ENCODE measurements at regions of chr15 and their contacts with region 1.

Region 1: DNA sequence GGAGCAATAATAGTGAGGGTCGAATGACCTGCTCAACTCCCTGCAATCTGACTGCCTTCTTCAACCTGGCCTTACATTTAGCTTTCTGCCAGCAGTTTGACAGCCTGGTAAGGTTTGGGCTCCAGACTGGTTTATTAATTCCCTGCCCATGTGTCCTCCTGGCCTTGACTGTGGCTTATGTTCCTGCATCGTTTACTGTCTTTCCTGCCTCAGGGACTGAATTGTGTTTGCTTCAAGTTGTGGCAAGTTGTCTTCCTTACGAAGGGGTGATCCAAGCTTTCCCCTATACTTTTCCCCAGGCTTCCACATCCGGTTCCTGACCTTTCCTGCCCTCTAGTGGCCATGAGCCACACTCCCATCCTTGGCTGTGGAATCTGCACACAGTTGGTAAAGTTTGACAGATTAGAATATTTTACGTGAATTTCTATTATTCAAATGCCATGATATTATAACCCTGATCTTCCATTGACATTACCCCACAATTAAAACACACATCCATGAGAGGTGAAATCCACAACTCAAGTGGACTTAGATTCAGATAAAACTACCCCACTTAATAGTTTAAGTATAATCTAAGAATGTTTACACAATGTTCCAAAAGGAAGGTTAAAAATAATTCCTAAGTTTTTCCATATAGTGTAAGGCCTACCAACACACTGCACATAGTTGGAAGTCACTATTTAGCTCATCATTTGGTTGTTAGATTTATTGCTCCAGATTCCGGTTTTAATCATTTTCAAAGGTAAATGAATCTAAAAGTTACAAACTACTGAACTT is 95.7 kb downstream of the NEDD4 start:
- DNase-seq: peak; percentile 47 to 63
- ATAC-seq: peak; percentile 78 to 85 (median 81)
- H3K4me3 ChIP-seq: peak overlapping the region; percentile 63
- H3K27ac ChIP-seq: peak overlapping the region; percentile 94
- H3K4me1 ChIP-seq: peaks cover 55% of the 10 kb centered on the region
- H3K27me3 ChIP-seq: no peaks in the 10 kb centered on the region
- CTCF ChIP-seq: peak; percentile 80

Region 2: GRCh38 chr15:55858661-55859060 is 39.1 kb before region 1 on chr15:
- intact Hi-C with region 1: loop called in 1 of 2 experiments (anchors 5 kb)
- DNase-seq: no peak
- ATAC-seq: no peak
- H3K4me3 ChIP-seq: no peak overlapping the region
- H3K27ac ChIP-seq: no peak overlapping the region
- H3K4me1 ChIP-seq: peaks cover 5% of the 10 kb centered on the region
- H3K27me3 ChIP-seq: no peaks in the 10 kb centered on the region
- CTCF ChIP-seq: no peak

Region 3: DNA sequence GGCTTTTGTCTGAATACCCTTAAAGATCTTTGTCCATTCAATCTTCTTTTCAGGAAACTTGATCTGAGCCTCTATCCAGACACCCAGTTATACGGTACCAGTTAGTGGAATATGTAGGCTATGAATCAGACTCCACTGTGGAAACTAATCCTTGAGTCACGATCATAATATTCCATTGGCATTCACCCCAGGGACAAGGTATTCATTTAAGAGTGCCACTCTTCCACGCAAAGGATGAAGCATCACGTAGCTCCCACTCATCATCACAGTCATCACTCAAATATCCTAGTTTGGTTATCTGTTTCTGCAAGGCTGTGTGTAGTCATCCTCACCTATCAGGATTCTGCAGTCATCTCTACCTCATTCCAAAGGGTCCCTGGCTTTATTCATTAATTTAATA is 10.0 kb after region 1 on chr15:
- intact Hi-C with region 1: loop called in 1 of 2 experiments (anchors 1 kb)
- DNase-seq: no peak
- ATAC-seq: peak; percentile 83 to 88 (median 86)
- H3K4me3 ChIP-seq: peak overlapping the region; percentile 43
- H3K27ac ChIP-seq: peak overlapping the region; percentile 82
- H3K4me1 ChIP-seq: peaks cover 41% of the 10 kb centered on the region
- H3K27me3 ChIP-seq: no peaks in the 10 kb centered on the region
- CTCF ChIP-seq: no peak

Region 4: DNA sequence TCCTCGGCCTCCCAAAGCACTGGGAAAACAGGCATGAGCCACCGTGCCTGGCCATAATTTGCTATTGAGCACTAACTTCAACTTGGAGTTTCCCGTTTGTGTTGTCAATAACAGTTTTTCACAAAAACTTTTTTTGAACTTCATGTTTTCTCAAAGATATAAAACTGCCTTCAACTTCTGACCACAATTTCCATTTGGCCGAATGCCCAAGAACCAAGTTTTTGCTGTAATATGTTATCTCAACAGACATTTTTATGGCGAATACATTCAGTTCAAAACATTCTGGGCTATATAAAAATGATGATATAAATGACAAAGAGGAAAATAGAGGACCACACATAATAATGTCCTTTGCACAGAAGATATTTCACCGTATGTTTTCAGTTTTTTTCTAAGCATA is 39.3 kb after region 1 on chr15:
- intact Hi-C with region 1: no loop called
- DNase-seq: no peak
- ATAC-seq: no peak
- H3K4me3 ChIP-seq: no peak overlapping the region
- H3K27ac ChIP-seq: no peak overlapping the region
- H3K4me1 ChIP-seq: no peaks in the 10 kb centered on the region
- H3K27me3 ChIP-seq: no peaks in the 10 kb centered on the region
- CTCF ChIP-seq: no peak

Region 5: DNA sequence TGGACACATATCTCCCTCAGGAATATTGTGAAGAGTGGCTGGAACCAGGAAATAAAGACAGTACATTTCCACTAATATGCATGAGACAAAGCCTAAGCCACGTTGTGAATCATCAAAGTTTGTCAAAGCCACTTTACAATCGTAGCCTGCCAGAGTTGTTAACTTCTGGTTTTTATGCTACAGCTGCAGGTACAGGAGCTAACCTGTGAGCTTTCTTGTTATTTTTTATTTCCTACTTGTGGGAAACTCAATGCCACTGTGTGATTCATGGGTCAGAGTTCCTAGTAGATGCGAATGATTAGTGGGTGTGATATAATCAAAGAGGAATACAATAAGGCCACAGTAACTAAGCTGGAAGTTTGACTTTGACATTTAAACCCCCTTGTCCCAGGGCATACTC is 423.1 kb after region 1 on chr15:
- intact Hi-C with region 1: no loop called
- DNase-seq: no peak
- ATAC-seq: no peak
- H3K4me3 ChIP-seq: no peak overlapping the region
- H3K27ac ChIP-seq: no peak overlapping the region
- H3K4me1 ChIP-seq: no peaks in the 10 kb centered on the region
- H3K27me3 ChIP-seq: peaks cover 0 to 2% (median 0%) of the 10 kb centered on the region in 3 donors
- CTCF ChIP-seq: no peak